H1 (cell line): ENCODE measurements at regions of chr1 and their contacts with region 1.

Region 1: DNA sequence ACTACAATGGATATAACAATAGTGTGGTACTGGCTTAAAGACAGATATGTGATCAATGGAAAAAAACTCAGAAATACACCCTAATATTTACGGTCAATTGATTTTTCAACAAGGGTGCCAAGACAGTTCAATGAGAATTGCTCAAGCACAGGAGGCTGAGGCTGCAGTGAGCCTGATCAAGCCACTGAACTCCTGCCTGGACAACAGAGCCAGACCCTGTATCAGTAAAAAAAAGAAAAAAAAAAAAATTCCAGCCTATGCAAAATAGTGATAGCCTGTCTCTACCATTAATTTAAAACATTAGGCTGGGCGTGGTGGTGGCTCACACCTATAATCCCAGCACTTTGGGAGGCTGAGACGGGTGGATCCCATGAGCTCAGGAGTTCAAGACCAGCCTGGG is 70.0 kb downstream of the SLC27A3 start:
- DNase-seq: no peak
- H3K4me3 ChIP-seq: no peak overlapping the region
- H3K27ac ChIP-seq: no peak overlapping the region
- H3K4me1 ChIP-seq: no peaks in the 10 kb centered on the region
- H3K27me3 ChIP-seq: no peaks in the 10 kb centered on the region
- CTCF ChIP-seq: no peak
- EP300 ChIP-seq: no peak
- POLR2A ChIP-seq: no peak
- RAD21 ChIP-seq: no peak

Region 2: GRCh38 chr1:153790966-153791647 is 54.1 kb before region 1 on chr1:
- CTCF ChIA-PET with region 1: no interaction called
- POLR2A ChIA-PET with region 1: no interaction called
- DNase-seq: no peak
- H3K4me3 ChIP-seq: no peak overlapping the region
- H3K27ac ChIP-seq: no peak overlapping the region
- H3K4me1 ChIP-seq: peaks cover 6 to 29% (median 22%) of the 10 kb centered on the region in 4 experiments
- H3K27me3 ChIP-seq: no peaks in the 10 kb centered on the region; a peak in 1 of 7 replicates
- CTCF ChIP-seq: no peak
- EP300 ChIP-seq: no peak
- POLR2A ChIP-seq: no peak
- RAD21 ChIP-seq: no peak

Region 3: GRCh38 chr1:153866045-153866850 is 21.1 kb after region 1 on chr1:
- CTCF ChIA-PET with region 1: interaction called, 3 read pairs
- POLR2A ChIA-PET with region 1: interaction called, 10 read pairs
- DNase-seq: no peak
- H3K4me3 ChIP-seq: no peak overlapping the region
- H3K27ac ChIP-seq: no peak overlapping the region
- H3K4me1 ChIP-seq: peaks cover 0 to 4% (median 1%) of the 10 kb centered on the region in 4 experiments; a peak in 4 of 7 replicates
- H3K27me3 ChIP-seq: no peaks in the 10 kb centered on the region
- CTCF ChIP-seq: no peak
- EP300 ChIP-seq: no peak
- POLR2A ChIP-seq: no peak
- RAD21 ChIP-seq: no peak